Caco-2 (cell line): ENCODE measurements at regions of chr15 and their contacts with region 1.

Region 1: DNA sequence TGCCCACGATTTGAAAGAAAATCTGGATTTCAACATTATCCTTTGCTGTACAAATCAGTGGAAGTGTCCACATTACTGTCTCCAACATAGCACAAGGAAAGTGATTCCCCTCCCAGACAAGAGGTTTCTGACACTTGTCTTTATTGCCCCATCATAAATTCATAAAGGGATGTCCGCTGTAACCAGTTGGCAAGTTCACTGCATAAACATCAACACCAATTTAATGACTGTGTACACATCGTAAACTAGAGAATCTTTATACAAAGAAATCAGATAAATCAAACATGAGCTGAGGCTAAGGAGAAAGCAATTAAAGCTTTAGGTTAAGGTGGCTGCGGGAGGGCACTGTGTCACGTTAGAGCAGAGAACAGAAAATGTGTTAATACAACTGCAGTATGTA is 129.8 kb downstream of the MEIS2 start:
- DNase-seq: peak; percentile 43 to 47
- H3K4me3 ChIP-seq: no peak overlapping the region
- H3K4me3 Mint-ChIP-seq: no peak overlapping the region
- H3K27ac Mint-ChIP-seq: peak overlapping the region; percentile 48
- H3K4me1 ChIP-seq: peaks cover 4% of the 10 kb centered on the region; the same call in 1 of the 2 replicates
- H3K4me1 Mint-ChIP-seq: peaks cover 7% of the 10 kb centered on the region
- H3K27me3 ChIP-seq: no peaks in the 10 kb centered on the region; the same call in 1 of the 2 replicates
- H3K27me3 Mint-ChIP-seq: peaks cover 4% of the 10 kb centered on the region
- CTCF ChIP-seq: no peak

Region 2: GRCh38 chr15:36798366-36798765 is 172.2 kb before region 1 on chr15:
- CTCF ChIA-PET with region 1: no interaction called
- POLR2A ChIA-PET with region 1: no interaction called
- intact Hi-C with region 1: loop called (anchors 10 kb)
- DNase-seq: no peak
- H3K4me3 ChIP-seq: no peak overlapping the region
- H3K4me3 Mint-ChIP-seq: no peak overlapping the region
- H3K27ac Mint-ChIP-seq: no peak overlapping the region
- H3K4me1 ChIP-seq: peaks cover 21% of the 10 kb centered on the region
- H3K4me1 Mint-ChIP-seq: peaks cover 9% of the 10 kb centered on the region
- H3K27me3 ChIP-seq: no peaks in the 10 kb centered on the region
- H3K27me3 Mint-ChIP-seq: no peaks in the 10 kb centered on the region
- CTCF ChIP-seq: no peak

Region 3: DNA sequence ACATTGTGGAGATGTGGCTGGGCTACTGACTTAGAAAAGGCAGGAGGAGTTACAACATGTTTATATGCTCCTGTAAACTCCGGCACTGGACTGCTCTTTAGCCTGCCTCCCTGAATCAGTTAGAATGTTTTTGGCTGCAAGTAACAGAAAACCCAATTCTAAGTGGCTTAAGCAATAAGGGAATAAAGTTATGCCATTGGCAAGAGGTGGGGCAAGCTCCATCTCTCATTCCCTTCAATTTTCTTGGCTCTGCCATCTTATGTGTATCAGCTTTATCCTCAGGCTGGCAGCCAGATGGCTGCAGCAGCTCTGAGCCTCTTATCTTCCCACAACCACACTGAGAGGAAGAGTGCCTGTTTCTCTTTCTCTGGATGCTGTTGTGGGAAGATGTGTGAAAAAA is 152.2 kb after region 1 on chr15:
- CTCF ChIA-PET with region 1: no interaction called
- POLR2A ChIA-PET with region 1: no interaction called
- intact Hi-C with region 1: no loop called
- DNase-seq: no peak
- H3K4me3 ChIP-seq: no peak overlapping the region
- H3K4me3 Mint-ChIP-seq: no peak overlapping the region
- H3K27ac Mint-ChIP-seq: no peak overlapping the region
- H3K4me1 ChIP-seq: no peaks in the 10 kb centered on the region
- H3K4me1 Mint-ChIP-seq: no peaks in the 10 kb centered on the region
- H3K27me3 ChIP-seq: no peaks in the 10 kb centered on the region
- H3K27me3 Mint-ChIP-seq: no peaks in the 10 kb centered on the region
- CTCF ChIP-seq: no peak

Region 4: DNA sequence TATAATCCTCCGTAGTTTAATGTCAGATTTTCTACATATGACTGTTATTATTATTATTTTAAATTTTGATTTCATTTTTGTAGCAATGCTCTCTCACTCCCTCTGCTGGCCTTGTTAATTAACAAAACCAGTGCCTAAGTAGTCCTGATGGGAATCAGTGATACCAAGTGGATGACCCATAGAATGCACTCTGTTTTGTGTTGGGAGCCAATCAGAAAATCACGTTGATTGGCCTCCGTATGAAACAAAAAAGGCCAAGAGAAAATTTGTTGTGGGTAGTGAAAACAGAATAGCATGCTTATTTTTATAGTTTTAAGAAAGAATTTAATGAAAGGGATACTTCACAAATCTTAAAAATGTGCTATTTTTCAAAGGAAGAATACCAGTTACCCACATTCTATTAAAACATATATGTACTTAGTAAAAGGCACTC is 164.2 kb after region 1 on chr15:
- CTCF ChIA-PET with region 1: no interaction called
- POLR2A ChIA-PET with region 1: no interaction called
- intact Hi-C with region 1: loop called (anchors 10 kb)
- DNase-seq: peak in 1 of 2 experiments; percentile 43
- H3K4me3 ChIP-seq: no peak overlapping the region
- H3K4me3 Mint-ChIP-seq: no peak overlapping the region
- H3K27ac Mint-ChIP-seq: no peak overlapping the region
- H3K4me1 ChIP-seq: peaks cover 12% of the 10 kb centered on the region; the same call in 1 of the 2 replicates
- H3K4me1 Mint-ChIP-seq: peaks cover 15% of the 10 kb centered on the region
- H3K27me3 ChIP-seq: no peaks in the 10 kb centered on the region
- H3K27me3 Mint-ChIP-seq: no peaks in the 10 kb centered on the region
- CTCF ChIP-seq: peak; percentile 51 to 67